Calu3 (cell line): ENCODE measurements at regions of chr1 and their contacts with region 1.

Region 1: GRCh38 chr1:27365372-27366112 is 1.2 kb downstream of the MAP3K6 start:
- DNase-seq: peak; percentile 71
- H3K4me3 Mint-ChIP-seq: peak overlapping the region; percentile 90
- H3K27ac Mint-ChIP-seq: peak overlapping the region; percentile 94
- H3K4me1 Mint-ChIP-seq: peaks cover 7% of the 10 kb centered on the region
- H3K27me3 Mint-ChIP-seq: no peaks in the 10 kb centered on the region
- CTCF ChIP-seq: no peak

Region 2: GRCh38 chr1:27395441-27396195 is 30.1 kb after region 1 on chr1:
- CTCF ChIA-PET with region 1: interaction called, 10 read pairs
- intact Hi-C with region 1: no loop called
- DNase-seq: peak; percentile 75
- H3K4me3 Mint-ChIP-seq: no peak overlapping the region
- H3K27ac Mint-ChIP-seq: no peak overlapping the region
- H3K4me1 Mint-ChIP-seq: peaks cover 11% of the 10 kb centered on the region
- H3K27me3 Mint-ChIP-seq: peaks cover 20% of the 10 kb centered on the region
- CTCF ChIP-seq: peak; percentile 81